ENCODE measurements at regions of chr6 and their contacts with region 1.

Region 1: DNA sequence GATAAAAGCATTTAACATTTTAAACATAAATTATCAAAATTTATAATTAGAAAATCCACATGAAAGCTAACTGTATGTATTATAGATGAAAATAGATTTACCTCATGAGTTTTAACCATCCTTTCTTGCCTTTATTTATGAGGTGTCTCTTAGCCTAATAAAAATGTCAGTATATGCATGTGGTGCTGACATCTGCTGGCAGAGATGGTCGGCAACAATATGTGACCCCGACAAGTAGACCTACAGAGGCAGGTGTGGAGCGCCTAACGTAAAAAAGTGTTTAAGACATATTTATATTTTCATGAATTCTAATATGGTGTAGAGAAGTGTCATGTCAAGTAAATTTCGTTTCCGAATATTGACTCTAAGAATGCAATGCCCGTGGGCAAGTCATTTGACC is 149.0 kb upstream of the FUT9 start:
- DNase-seq: peak; percentile 41
- ATAC-seq: peak; percentile 88
- H3K4me3 ChIP-seq: no peak overlapping the region
- H3K27ac ChIP-seq: no peak overlapping the region
- H3K4me1 ChIP-seq: no peaks in the 10 kb centered on the region; the same call in 1 of the 2 replicates
- H3K27me3 ChIP-seq: no peaks in the 10 kb centered on the region
- CTCF ChIP-seq: peak; percentile 79
- EP300 ChIP-seq: no peak
- POLR2A ChIP-seq: no peak
- RAD21 ChIP-seq: peak; percentile 73

Region 2: GRCh38 chr6:95431637-95432228 is 435.0 kb before region 1 on chr6:
- CTCF ChIA-PET with region 1: no interaction called
- POLR2A ChIA-PET with region 1: no interaction called
- in situ Hi-C with region 1: no loop called
- intact Hi-C with region 1: loop called (anchors 1 kb)
- DNase-seq: peak; percentile 9
- ATAC-seq: no peak
- H3K4me3 ChIP-seq: no peak overlapping the region
- H3K27ac ChIP-seq: no peak overlapping the region
- H3K4me1 ChIP-seq: no peaks in the 10 kb centered on the region
- H3K27me3 ChIP-seq: no peaks in the 10 kb centered on the region
- CTCF ChIP-seq: peak; percentile 59
- EP300 ChIP-seq: no peak
- POLR2A ChIP-seq: no peak
- RAD21 ChIP-seq: no peak

Region 3: DNA sequence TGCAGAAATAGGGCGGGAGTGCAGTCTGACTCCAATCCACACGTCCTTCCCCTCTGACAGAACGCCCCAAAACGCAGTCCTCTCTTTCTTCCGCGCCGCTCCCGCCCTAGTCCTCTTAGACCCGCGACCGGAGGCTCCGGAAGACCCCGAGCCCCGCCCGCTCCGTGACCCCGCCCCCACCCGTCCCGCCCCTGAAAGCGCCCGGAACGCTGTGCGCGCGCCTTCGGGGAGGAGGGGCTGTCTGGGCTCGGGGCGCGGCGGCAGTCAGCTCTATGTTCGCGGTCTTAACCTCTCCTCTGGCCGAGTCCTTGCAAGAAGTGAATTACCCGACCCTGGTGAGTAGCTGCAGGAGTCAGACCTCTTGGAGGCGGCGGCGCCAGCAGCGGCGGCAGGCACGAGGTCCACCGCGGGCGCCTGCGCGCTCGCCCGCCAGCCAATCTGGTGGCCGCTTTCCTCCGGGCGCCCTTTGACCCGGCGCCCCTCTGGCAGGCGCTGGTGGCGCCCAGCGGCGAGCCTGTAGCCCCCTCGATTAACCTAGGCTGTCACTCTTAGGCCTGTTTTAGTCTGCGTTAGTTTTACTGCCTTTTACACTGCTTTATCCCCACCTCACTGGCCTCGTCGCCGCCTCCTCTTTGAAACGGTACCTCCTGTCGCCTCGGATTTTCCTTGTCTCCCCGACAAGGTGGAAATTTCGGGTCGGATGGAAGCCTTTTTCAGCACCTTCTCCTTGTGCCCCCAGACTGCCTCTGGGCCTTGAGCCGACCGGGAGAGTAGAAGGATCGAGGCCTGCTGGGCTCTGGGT is 289.2 kb before region 1 on chr6 and contains the start of gene MANEA:
- CTCF ChIA-PET with region 1: no interaction called
- POLR2A ChIA-PET with region 1: no interaction called
- in situ Hi-C with region 1: loop called (anchors 25 kb)
- intact Hi-C with region 1: no loop called
- DNase-seq: peak; percentile 61
- ATAC-seq: peak; percentile 96
- H3K4me3 ChIP-seq: peak within 1 kb of the TSS; percentile 73 to 99 (median 78)
- H3K27ac ChIP-seq: peak within 1 kb of the TSS; percentile 83
- H3K4me1 ChIP-seq: peaks cover 35% of the 10 kb centered on the region
- H3K27me3 ChIP-seq: no peaks in the 10 kb centered on the region; a peak in 1 of 5 replicates
- CTCF ChIP-seq: 0 out of 2 replicates have a peak, but pooled peaks have one; percentile 11
- EP300 ChIP-seq: no peak
- POLR2A ChIP-seq: peak; percentile 56 to 61; a peak in 3 of 4 replicates
- RAD21 ChIP-seq: peak; percentile 20; the same call in 1 of the 2 replicates
- total RNA-seq, gene MANEA: 7.6 and 10.9 TPM in 2 replicates

Region 4: DNA sequence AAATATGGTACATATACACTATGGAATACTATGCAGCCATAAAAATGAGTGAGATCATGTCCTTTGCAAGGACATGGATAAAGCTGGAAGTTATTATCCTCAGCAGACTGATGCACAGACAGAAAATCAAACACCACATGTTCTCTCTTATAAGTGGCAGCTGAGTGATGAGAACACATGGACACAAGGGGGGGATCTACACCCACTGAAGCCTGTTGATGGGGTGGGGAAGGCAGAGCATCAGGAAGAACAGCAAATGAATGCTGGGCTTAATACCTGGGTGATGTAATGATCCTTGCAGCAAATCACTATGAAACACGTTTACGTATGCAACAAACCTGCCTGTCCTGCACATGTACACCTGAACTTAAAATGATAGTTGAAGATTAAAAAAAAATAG is 218.1 kb before region 1 on chr6:
- CTCF ChIA-PET with region 1: interaction called, 12 read pairs
- POLR2A ChIA-PET with region 1: no interaction called
- in situ Hi-C with region 1: loop called (anchors 5 kb)
- intact Hi-C with region 1: loop called (anchors 1 kb)
- DNase-seq: peak; percentile 46
- ATAC-seq: peak; percentile 90
- H3K4me3 ChIP-seq: no peak overlapping the region
- H3K27ac ChIP-seq: no peak overlapping the region
- H3K4me1 ChIP-seq: no peaks in the 10 kb centered on the region
- H3K27me3 ChIP-seq: no peaks in the 10 kb centered on the region
- CTCF ChIP-seq: peak; percentile 74
- EP300 ChIP-seq: no peak
- POLR2A ChIP-seq: no peak
- RAD21 ChIP-seq: peak; percentile 41; the same call in 1 of the 2 replicates

Region 5: GRCh38 chr6:95768539-95768938 is 98.2 kb before region 1 on chr6:
- CTCF ChIA-PET with region 1: no interaction called
- POLR2A ChIA-PET with region 1: no interaction called
- in situ Hi-C with region 1: no loop called
- intact Hi-C with region 1: loop called (anchors 1 kb)
- DNase-seq: peak; percentile 49
- ATAC-seq: peak; percentile 99
- H3K4me3 ChIP-seq: no peak overlapping the region
- H3K27ac ChIP-seq: no peak overlapping the region
- H3K4me1 ChIP-seq: 0 out of 2 replicates have a peak, but pooled peaks cover 5% of the 10 kb centered on the region
- H3K27me3 ChIP-seq: no peaks in the 10 kb centered on the region
- CTCF ChIP-seq: peak; percentile 77
- EP300 ChIP-seq: no peak
- POLR2A ChIP-seq: no peak
- RAD21 ChIP-seq: peak; percentile 86

Region 6: GRCh38 chr6:96089173-96089572 is 222.4 kb after region 1 on chr6:
- CTCF ChIA-PET with region 1: no interaction called
- POLR2A ChIA-PET with region 1: no interaction called
- in situ Hi-C with region 1: no loop called
- intact Hi-C with region 1: loop called (anchors 10 kb)
- DNase-seq: peak; percentile 20
- ATAC-seq: peak; percentile 71
- H3K4me3 ChIP-seq: no peak overlapping the region
- H3K27ac ChIP-seq: no peak overlapping the region
- H3K4me1 ChIP-seq: no peaks in the 10 kb centered on the region
- H3K27me3 ChIP-seq: no peaks in the 10 kb centered on the region
- CTCF ChIP-seq: peak; percentile 67
- EP300 ChIP-seq: no peak
- POLR2A ChIP-seq: no peak
- RAD21 ChIP-seq: no peak; the same call in 1 of the 2 replicates

Measured in HepG2 (cell line).